Dendritic cell treated with granulocyte-macrophage colony-stimulating factor and Interleukin-4, amounts not matched to agents 40 ng/mL and 50 ng/mL, for 4 days (primary cell): ENCODE measurements at regions of chr17 and their contacts with region 1.

Region 1: GRCh38 chr17:4304417-4305027 is 40.7 kb upstream of the ANKFY1 start:
- H3K4me3 Mint-ChIP-seq: no peak overlapping the region
- H3K27ac Mint-ChIP-seq: no peak overlapping the region
- H3K4me1 Mint-ChIP-seq: no peaks in the 10 kb centered on the region
- H3K27me3 Mint-ChIP-seq: no peaks in the 10 kb centered on the region

Region 2: DNA sequence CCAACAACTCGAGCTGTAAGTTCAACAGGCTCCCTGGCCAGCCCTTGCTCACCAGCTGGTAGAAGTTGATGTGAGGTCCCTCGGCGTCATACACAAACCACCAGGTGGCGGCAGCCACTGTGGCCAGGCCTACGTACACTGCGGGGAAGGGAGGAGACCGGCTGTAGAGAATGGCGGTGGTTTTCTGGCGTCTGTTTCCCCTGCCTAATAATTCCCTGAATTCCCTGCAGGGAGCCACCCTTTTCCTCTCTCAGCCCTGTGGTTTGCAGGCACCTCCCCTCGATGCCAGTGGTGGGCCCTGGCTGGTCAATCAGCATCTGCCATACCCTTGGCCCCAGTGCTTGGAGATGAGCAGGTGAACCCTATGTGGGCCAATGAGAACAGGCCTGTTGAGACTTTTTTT is 369.4 kb before region 1 on chr17:
- intact Hi-C with region 1: no loop called
- H3K4me3 Mint-ChIP-seq: no peak overlapping the region
- H3K27ac Mint-ChIP-seq: no peak overlapping the region
- H3K4me1 Mint-ChIP-seq: no peaks in the 10 kb centered on the region
- H3K27me3 Mint-ChIP-seq: no peaks in the 10 kb centered on the region

Region 3: GRCh38 chr17:4143563-4144421 is 160.7 kb before region 1 on chr17:
- intact Hi-C with region 1: no loop called
- H3K4me3 Mint-ChIP-seq: peak overlapping the region; percentile 95
- H3K27ac Mint-ChIP-seq: peak overlapping the region; percentile 100
- H3K4me1 Mint-ChIP-seq: peaks cover 39% of the 10 kb centered on the region
- H3K27me3 Mint-ChIP-seq: no peaks in the 10 kb centered on the region

Region 4: GRCh38 chr17:4215882-4216570 is 88.5 kb before region 1 on chr17:
- intact Hi-C with region 1: loop called (anchors 1 kb)
- H3K4me3 Mint-ChIP-seq: no peak overlapping the region
- H3K27ac Mint-ChIP-seq: peak overlapping the region; percentile 57
- H3K4me1 Mint-ChIP-seq: peaks cover 22% of the 10 kb centered on the region
- H3K27me3 Mint-ChIP-seq: peaks cover 19% of the 10 kb centered on the region

Region 5: GRCh38 chr17:4366327-4367063 is 62.0 kb after region 1 on chr17 and contains the start of gene UBE2G1:
- intact Hi-C with region 1: loop called (anchors 10 kb)
- H3K4me3 Mint-ChIP-seq: peak within 1 kb of the TSS; percentile 82
- H3K27ac Mint-ChIP-seq: peak within 1 kb of the TSS; percentile 93
- H3K4me1 Mint-ChIP-seq: peaks cover 22% of the 10 kb centered on the region
- H3K27me3 Mint-ChIP-seq: no peaks in the 10 kb centered on the region

Region 6: GRCh38 chr17:4407851-4408250 is 103.3 kb after region 1 on chr17:
- intact Hi-C with region 1: loop called (anchors 10 kb)
- H3K4me3 Mint-ChIP-seq: no peak overlapping the region
- H3K27ac Mint-ChIP-seq: no peak overlapping the region
- H3K4me1 Mint-ChIP-seq: peaks cover 9% of the 10 kb centered on the region
- H3K27me3 Mint-ChIP-seq: peaks cover 19% of the 10 kb centered on the region